Esophagus muscularis mucosa (tissue), 4 donors: ENCODE measurements at regions of chr2 and their contacts with region 1.

Region 1: DNA sequence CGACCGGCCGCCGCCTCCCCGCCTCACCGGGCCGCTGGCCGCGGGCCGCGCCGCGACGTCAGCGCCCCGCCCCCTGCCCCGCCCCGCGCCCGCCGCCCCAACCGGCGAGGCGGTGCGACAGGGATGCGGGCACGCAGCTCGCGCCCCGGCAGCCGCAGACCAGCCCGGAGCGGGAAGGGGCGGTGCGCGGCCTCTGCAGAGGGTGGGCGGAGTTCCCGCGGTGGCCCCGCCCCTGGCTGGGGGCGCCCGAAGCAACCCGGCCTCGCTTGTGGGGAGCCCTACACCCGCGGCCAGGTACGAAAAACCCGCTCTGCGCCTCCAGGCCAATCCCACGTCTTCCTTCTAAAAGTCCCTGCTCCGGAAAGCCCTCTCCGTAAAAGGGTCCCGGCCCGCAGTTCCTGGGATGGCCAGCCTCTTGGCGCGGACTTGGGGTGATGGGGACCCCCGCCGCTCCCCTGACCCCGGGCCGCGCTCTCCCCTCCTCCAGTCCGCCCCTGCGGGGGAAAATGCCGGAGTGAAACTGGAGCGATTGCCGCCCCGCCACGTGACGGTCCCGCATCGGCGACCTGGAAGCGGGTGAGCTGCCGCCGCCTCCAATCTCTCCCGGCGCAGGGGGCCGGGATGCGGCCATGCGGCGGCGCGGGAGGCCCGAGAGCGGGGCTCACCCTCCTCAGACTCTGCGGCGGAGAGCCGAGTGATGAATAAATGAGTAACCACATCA is at the start of gene RAB11FIP5:
- DNase-seq: no peak
- H3K4me3 ChIP-seq: peak within 1 kb of the TSS; percentile 63 to 97 (median 78)
- H3K27ac ChIP-seq: peak within 1 kb of the TSS; percentile 93 to 97 (median 96)
- H3K4me1 ChIP-seq: peaks cover 18 to 48% (median 39%) of the 10 kb centered on the region in 4 donors
- H3K27me3 ChIP-seq: peaks cover 0 to 3% (median 0%) of the 10 kb centered on the region in 4 donors
- CTCF ChIP-seq: no peak
- EP300 ChIP-seq: no peak
- POLR2A ChIP-seq: peak; percentile 66
- total RNA-seq, gene RAB11FIP5: 17.0 to 46.4 (median 38.4) TPM

Region 2: GRCh38 chr2:72713857-72714256 is 399.2 kb before region 1 on chr2:
- intact Hi-C with region 1: no loop called
- DNase-seq: no peak
- H3K4me3 ChIP-seq: no peak overlapping the region
- H3K27ac ChIP-seq: no peak overlapping the region
- H3K4me1 ChIP-seq: peaks cover 0 to 8% (median 0%) of the 10 kb centered on the region in 4 donors
- H3K27me3 ChIP-seq: no peaks in the 10 kb centered on the region
- CTCF ChIP-seq: no peak
- EP300 ChIP-seq: no peak
- POLR2A ChIP-seq: no peak

Region 3: GRCh38 chr2:73071360-73072133 is 41.5 kb before region 1 on chr2 and contains the start of gene SFXN5:
- intact Hi-C with region 1: loop called (anchors 2 kb)
- DNase-seq: peak; percentile 100
- H3K4me3 ChIP-seq: peak within 1 kb of the TSS; percentile 65 to 94 (median 82)
- H3K27ac ChIP-seq: peak within 1 kb of the TSS; percentile 83 to 97 (median 93)
- H3K4me1 ChIP-seq: peaks cover 34 to 47% (median 40%) of the 10 kb centered on the region in 4 donors
- H3K27me3 ChIP-seq: no peaks in the 10 kb centered on the region
- CTCF ChIP-seq: peak in 2 of 3 experiments; percentile 18 to 36
- EP300 ChIP-seq: no peak
- POLR2A ChIP-seq: no peak
- total RNA-seq, gene SFXN5: 5.8 to 10.0 (median 6.8) TPM

Region 4: DNA sequence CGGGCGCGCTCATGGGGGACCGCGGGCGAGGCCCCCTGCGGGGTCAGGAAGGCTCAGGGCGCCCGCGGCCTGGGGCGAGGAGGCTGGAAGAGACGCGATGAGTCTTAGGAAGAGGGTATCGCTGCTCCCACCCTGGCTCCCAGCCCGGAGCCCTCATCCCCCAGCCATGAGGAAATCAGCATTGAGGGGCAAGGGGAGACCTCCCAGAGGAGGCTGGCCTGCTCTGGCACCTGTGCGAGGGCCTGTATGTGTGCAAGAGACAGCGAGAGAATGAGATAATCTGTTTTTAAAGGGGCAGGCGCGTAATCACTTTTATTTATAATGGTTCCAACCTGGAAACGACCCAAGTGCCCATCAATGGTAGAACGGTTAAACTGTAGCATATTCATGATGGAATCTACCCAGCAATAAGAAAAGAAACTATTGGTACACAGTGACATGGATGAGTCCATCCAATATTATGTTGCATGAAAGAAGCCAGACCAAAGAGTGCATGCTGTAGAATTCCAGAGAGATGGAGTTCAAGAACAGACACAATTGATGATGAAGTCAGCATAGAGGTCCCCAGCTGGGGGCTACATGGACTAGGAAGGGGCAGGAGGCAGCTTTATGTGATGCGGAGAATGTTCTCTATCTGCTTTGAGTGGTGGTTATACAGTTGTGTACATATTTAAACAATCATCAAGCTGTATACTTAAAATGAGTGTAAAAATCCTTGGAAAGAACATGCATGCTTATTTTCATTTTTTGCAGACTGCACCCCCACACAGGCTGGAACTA is 156.8 kb after region 1 on chr2:
- intact Hi-C with region 1: no loop called
- DNase-seq: no peak
- H3K4me3 ChIP-seq: peak overlapping the region in 3 of 4 donors; percentile 16 to 46 (median 32)
- H3K27ac ChIP-seq: no peak overlapping the region
- H3K4me1 ChIP-seq: peaks cover 7 to 14% (median 13%) of the 10 kb centered on the region in 4 donors
- H3K27me3 ChIP-seq: peaks cover 4 to 74% (median 20%) of the 10 kb centered on the region in 4 donors
- CTCF ChIP-seq: no peak
- EP300 ChIP-seq: no peak
- POLR2A ChIP-seq: no peak